ENCODE measurements at regions of chr4 and their contacts with region 1.

Region 1: GRCh38 chr4:55887594-55887993 is 34.1 kb downstream of the EXOC1 start:
- DNase-seq: no peak
- ATAC-seq: no peak
- H3K4me3 ChIP-seq: no peak overlapping the region
- H3K27ac ChIP-seq: no peak overlapping the region
- H3K4me1 ChIP-seq: no peaks in the 10 kb centered on the region
- H3K27me3 ChIP-seq: no peaks in the 10 kb centered on the region
- CTCF ChIP-seq: no peak
- POLR2A ChIP-seq: no peak

Region 2: DNA sequence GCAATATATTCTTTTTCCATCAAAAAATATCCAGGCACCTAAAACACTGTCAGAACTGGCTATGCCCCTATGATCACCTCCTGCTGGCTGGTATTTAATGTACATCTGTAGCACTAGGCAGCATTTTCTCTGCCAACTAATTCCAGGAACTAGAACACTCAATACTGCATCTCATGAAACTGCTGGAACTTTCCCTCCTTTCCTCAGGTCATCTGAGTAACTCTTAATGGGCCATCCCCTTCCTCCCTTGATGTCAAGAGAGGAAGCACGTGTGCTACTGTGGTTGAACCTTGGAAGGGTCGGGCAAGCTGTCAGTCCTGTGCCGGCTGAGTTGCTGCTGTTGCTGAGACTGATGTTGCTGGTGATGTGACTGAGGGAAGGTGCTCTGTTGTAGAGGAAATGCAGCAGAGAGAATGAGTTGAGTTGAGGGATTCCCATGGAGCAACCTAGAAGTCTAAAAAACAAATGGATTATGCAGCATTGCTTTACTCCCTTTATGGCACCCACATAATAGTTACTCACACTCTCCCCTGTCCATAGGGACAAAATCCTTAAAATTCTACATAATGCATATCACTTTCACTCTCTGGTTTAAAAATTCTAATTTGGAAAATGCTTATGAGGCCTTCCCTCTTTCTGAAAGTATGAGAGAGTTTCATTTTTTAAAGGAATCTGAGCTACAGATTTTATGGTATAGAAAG is 452.3 kb before region 1 on chr4:
- intact Hi-C with region 1: loop called in 1 of 10 experiments (anchors 10 kb)
- DNase-seq: no peak
- ATAC-seq: peak in 2 of 4 donors; percentile 42 to 47
- H3K4me3 ChIP-seq: no peak overlapping the region
- H3K27ac ChIP-seq: peak overlapping the region in 1 of 12 donors; percentile 10
- H3K4me1 ChIP-seq: peaks cover 0 to 6% (median 0%) of the 10 kb centered on the region in 12 donors
- H3K27me3 ChIP-seq: no peaks in the 10 kb centered on the region
- CTCF ChIP-seq: peak in 2 of 12 donors; percentile 12 to 18
- POLR2A ChIP-seq: no peak